ENCODE measurements at regions of chr3 and their contacts with region 1.

Region 1: DNA sequence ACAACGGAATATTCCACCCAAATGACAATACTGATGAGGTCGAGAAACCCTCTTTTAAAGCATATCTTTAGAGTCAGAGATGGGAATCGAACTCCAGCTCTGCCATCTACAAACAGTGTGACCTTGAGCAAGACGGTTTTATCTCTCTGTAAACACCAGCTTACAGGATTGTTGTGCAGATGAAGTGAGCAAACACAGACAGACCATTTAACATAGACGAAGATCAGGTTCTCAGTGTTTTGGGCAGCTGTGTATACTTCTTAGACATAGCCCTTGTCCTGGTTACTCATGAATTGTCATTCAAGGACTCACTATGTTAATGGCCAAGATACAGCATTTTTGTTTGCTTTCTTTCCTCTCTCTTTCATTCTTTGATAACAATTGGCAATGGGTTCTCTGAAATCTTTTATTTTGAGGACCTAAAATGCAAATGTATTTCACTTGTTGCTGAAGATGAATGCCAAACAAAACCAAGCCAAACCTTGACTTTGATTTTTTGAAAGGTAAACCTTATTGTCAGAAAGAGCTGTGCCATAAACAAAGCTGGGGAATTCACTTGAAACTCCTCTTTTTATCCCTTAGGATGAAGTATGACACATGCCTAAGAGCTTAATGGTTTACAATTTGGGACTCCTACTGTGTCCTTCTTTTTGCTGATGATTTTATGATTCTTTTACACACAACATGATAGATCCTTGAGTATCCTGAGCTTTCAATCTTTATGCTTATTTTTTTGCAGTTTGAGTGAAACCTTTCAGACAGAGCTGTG is 250.0 kb upstream of the PDZRN3 start:
- DNase-seq: no peak
- ATAC-seq: no peak
- H3K4me3 ChIP-seq: no peak overlapping the region
- H3K27ac ChIP-seq: no peak overlapping the region
- H3K4me1 ChIP-seq: no peaks in the 10 kb centered on the region
- H3K27me3 ChIP-seq: peaks cover 1% of the 10 kb centered on the region; the same call in 1 of the 2 replicates
- CTCF ChIP-seq: no peak
- POLR2A ChIP-seq: no peak
- RAD21 ChIP-seq: no peak

Region 2: DNA sequence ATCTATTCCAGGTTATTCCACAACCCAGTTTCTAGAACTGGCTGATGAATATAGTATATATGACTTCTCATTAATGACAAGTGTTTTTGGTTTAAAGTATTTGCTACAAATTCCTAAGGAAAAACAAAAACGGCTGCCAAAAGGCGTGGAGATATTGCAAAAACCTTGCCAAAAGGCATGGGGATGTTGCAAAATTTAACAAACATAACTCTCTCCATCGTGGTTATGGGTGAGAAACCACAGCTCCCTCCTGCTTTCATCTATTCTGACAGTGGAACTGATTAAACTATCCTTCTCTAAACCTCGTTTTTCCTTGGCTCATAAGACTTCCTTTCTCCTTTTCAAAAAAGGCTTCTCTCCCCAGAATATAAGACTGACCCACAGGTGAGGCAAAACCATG is 91.9 kb after region 1 on chr3:
- CTCF ChIA-PET with region 1: no interaction called
- POLR2A ChIA-PET with region 1: no interaction called
- dilution Hi-C with region 1: no loop called
- in situ Hi-C with region 1: no loop called
- intact Hi-C with region 1: no loop called
- DNase-seq: no peak
- ATAC-seq: no peak
- H3K4me3 ChIP-seq: no peak overlapping the region
- H3K27ac ChIP-seq: no peak overlapping the region
- H3K4me1 ChIP-seq: no peaks in the 10 kb centered on the region
- H3K27me3 ChIP-seq: no peaks in the 10 kb centered on the region
- CTCF ChIP-seq: no peak
- POLR2A ChIP-seq: no peak
- RAD21 ChIP-seq: no peak

Region 3: GRCh38 chr3:74075241-74075640 is 200.5 kb after region 1 on chr3:
- CTCF ChIA-PET with region 1: no interaction called
- POLR2A ChIA-PET with region 1: no interaction called
- dilution Hi-C with region 1: no loop called
- in situ Hi-C with region 1: no loop called
- intact Hi-C with region 1: no loop called
- DNase-seq: no peak
- ATAC-seq: no peak
- H3K4me3 ChIP-seq: no peak overlapping the region
- H3K27ac ChIP-seq: no peak overlapping the region
- H3K4me1 ChIP-seq: no peaks in the 10 kb centered on the region
- H3K27me3 ChIP-seq: no peaks in the 10 kb centered on the region
- CTCF ChIP-seq: no peak
- POLR2A ChIP-seq: no peak
- RAD21 ChIP-seq: no peak

Region 4: GRCh38 chr3:74089814-74090213 is 215.0 kb after region 1 on chr3:
- CTCF ChIA-PET with region 1: no interaction called
- POLR2A ChIA-PET with region 1: no interaction called
- dilution Hi-C with region 1: no loop called
- in situ Hi-C with region 1: no loop called
- intact Hi-C with region 1: no loop called
- DNase-seq: peak; percentile 9
- ATAC-seq: peak; percentile 75
- H3K4me3 ChIP-seq: no peak overlapping the region
- H3K27ac ChIP-seq: no peak overlapping the region
- H3K4me1 ChIP-seq: no peaks in the 10 kb centered on the region; the same call in 1 of the 2 replicates
- H3K27me3 ChIP-seq: no peaks in the 10 kb centered on the region
- CTCF ChIP-seq: no peak
- POLR2A ChIP-seq: no peak
- RAD21 ChIP-seq: no peak

Region 5: DNA sequence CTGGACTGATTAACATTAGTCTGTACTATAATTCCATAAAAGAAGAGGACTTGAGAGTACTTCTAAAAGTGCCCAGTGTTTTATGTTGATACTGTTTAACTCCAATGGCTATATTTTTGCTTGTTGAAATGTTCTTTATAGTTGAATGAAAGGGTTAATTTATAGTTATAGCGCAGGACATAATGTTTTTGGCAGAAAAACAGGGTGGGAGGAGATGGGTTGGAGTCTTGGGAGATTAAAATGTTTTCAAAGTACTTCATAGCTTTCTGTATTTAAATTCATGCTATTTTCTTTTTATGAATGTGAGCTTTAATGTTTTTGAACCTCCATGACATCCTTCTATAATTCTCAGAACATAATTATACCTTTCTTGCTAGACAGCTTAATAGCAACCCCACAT is 631.5 kb after region 1 on chr3:
- CTCF ChIA-PET with region 1: no interaction called
- POLR2A ChIA-PET with region 1: no interaction called
- dilution Hi-C with region 1: no loop called
- in situ Hi-C with region 1: no loop called
- intact Hi-C with region 1: no loop called
- DNase-seq: no peak
- ATAC-seq: no peak
- H3K4me3 ChIP-seq: no peak overlapping the region
- H3K27ac ChIP-seq: no peak overlapping the region
- H3K4me1 ChIP-seq: no peaks in the 10 kb centered on the region
- H3K27me3 ChIP-seq: no peaks in the 10 kb centered on the region
- CTCF ChIP-seq: no peak
- POLR2A ChIP-seq: no peak
- RAD21 ChIP-seq: no peak

Region 6: DNA sequence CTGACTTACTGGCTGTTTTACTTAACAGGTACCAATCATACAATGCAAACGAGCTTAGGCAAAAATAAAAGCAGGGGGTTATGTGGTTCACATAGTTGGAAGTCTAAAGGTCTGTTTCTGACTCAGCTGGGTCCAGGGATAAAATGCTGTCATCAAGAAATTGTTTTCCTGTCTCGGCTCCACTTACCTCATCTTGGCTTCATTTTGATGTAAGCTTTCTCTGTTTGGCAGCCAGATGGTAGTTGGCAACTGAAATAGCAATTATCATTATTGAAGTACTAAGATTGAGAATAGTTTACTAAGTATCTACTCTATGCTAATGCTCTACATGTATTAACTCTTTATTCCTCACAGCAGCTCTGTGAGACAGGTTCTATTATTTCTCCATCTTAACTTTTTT is 776.5 kb after region 1 on chr3:
- CTCF ChIA-PET with region 1: no interaction called
- POLR2A ChIA-PET with region 1: no interaction called
- dilution Hi-C with region 1: no loop called
- in situ Hi-C with region 1: loop called (anchors 25 kb)
- intact Hi-C with region 1: no loop called
- DNase-seq: peak; percentile 57
- ATAC-seq: no peak
- H3K4me3 ChIP-seq: no peak overlapping the region
- H3K27ac ChIP-seq: no peak overlapping the region
- H3K4me1 ChIP-seq: no peaks in the 10 kb centered on the region
- H3K27me3 ChIP-seq: no peaks in the 10 kb centered on the region
- CTCF ChIP-seq: no peak
- POLR2A ChIP-seq: no peak
- RAD21 ChIP-seq: no peak